ENCODE measurements at regions of chr9 and their contacts with region 1.

Region 1: DNA sequence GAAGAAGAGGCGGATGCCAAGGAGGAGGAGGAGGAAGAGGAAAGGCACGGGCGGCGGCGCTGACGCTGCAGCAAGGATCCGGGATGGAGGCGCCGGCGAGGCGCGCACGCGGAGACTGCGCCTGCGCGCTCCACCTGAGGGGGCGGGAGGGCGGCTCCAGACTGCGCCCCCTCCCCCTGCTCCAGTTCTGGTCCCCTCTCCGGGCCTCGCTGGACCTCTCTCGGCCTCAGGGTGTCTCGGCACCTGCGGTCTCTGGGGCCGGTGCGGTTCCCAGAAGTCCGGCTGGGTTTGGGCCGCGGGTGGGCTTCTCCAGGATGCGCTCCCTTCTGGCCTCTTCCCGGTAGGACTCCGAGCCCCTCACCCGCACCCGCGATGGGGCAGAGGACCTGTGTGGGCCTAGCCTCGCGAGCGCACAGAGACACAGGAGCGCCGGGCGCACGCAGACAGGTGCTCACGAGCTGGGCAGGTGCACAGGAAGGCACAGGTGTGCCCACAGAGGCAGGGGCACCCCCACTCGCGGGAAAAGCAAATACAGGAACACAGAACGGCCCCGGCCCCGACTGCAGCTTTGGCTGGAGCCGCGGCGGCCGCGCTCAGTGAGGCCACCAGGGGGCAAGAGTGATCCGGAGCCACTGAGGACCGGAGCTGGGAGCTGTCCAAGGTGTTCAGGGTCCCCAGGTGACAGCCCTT is at the start of gene NPDC1:
- DNase-seq: peak; percentile 94
- ATAC-seq: peak; percentile 69
- H3K4me3 Mint-ChIP-seq: peak within 1 kb of the TSS; percentile 77
- H3K27ac Mint-ChIP-seq: no peak within 1 kb of the TSS
- H3K4me1 Mint-ChIP-seq: peaks cover 10% of the 10 kb centered on the region
- H3K27me3 Mint-ChIP-seq: peaks cover 47% of the 10 kb centered on the region
- CTCF ChIP-seq: peak; percentile 83
- total RNA-seq, gene NPDC1: 64.3 to 68.8 TPM (median 64.5 TPM) in 3 replicates

Region 2: DNA sequence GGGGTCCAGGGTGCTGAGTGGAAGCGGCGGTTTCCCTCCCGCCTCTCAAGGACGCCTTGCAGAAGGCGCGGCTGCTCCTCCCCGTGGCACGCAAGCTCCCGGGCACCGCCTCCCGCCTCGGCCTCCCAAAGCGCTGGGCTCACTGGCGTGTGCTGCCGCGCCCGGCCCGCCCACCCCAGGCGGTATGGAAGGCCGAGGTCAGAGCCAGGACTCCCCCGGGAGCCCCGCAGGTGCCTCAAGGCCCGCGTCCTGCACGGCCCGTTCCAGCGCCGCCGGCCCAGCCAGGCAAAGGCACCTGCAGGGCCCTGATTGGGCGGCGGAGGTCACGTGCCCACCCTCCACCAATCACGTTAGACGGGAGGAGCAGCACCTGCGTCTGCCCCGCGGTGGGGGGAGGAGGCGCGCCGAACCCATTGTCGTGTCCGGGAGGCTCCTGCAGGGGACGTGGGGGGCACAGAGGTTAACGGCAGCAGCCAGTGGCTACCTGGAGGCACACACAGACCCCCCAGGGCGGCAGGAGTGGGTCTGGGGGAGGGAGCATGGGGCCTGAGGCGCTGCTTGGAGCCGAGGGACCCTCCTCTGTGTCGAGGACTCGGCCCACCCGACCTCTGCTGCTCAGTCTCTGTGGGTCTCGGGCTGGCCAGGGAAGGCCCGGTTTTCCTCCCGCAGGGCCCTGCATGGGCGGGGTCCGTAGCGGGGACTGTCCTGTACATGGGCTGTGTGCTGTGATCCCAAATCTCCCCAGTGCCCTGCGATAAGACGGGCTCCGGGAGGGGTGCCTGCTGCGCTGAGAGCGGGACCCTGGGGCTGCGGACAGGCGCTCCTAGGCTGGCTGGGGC is 96.2 kb before region 1 on chr9:
- CTCF ChIA-PET with region 1: interaction called, 12 read pairs
- POLR2A ChIA-PET with region 1: no interaction called
- DNase-seq: peak; percentile 97
- ATAC-seq: peak; percentile 81
- H3K4me3 Mint-ChIP-seq: peak overlapping the region; percentile 72
- H3K27ac Mint-ChIP-seq: no peak overlapping the region
- H3K4me1 Mint-ChIP-seq: peaks cover 7% of the 10 kb centered on the region
- H3K27me3 Mint-ChIP-seq: no peaks in the 10 kb centered on the region
- CTCF ChIP-seq: no peak

Region 3: GRCh38 chr9:136991993-136992818 is 54.0 kb before region 1 on chr9 and contains the start of gene PAXX:
- CTCF ChIA-PET with region 1: interaction called, 13 read pairs
- POLR2A ChIA-PET with region 1: no interaction called
- DNase-seq: peak; percentile 93
- ATAC-seq: peak; percentile 90
- H3K4me3 Mint-ChIP-seq: peak within 1 kb of the TSS; percentile 72
- H3K27ac Mint-ChIP-seq: no peak within 1 kb of the TSS
- H3K4me1 Mint-ChIP-seq: no peaks in the 10 kb centered on the region; the same call in 1 of the 2 replicates
- H3K27me3 Mint-ChIP-seq: peaks cover 34% of the 10 kb centered on the region
- CTCF ChIP-seq: no peak
- total RNA-seq, gene PAXX: 44.1 to 45.3 TPM (median 44.6 TPM) in 3 replicates

Region 4: DNA sequence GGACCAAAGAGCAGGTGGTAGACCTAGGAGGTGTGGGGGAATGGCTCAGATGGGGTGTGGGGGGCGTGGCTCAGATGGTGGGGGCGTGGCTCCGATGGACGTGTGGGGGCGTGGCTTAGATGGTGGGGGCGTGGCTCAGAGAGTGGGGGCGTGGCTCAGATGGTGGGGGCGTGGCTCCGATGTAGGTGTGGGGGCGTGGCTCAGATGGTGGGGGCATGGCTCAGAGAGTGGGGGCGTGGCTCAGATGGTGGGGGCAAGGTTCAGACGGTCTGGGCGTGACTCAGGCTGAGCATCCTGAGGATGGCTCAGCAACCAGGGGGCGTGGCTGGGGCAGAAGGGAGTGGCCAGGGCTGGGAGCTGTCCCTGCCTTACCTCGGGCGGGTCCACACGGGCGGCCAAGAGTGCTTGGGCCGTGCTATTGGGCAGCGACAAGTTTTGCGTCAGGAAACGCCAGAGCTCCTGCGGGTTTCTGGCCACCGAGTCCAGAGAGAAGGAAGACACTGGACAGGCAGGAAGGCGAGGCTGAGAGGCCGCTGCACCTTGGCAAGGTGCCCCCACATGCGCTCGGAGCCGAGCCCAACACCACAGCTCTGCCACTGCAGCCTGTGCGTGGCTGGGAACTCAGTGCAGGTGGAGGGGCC is 24.1 kb before region 1 on chr9:
- CTCF ChIA-PET with region 1: interaction called, 12 read pairs
- POLR2A ChIA-PET with region 1: no interaction called
- DNase-seq: peak; percentile 98
- ATAC-seq: peak; percentile 96
- H3K4me3 Mint-ChIP-seq: no peak overlapping the region
- H3K27ac Mint-ChIP-seq: no peak overlapping the region; the same call in 1 of the 2 replicates
- H3K4me1 Mint-ChIP-seq: no peaks in the 10 kb centered on the region; the same call in 1 of the 2 replicates
- H3K27me3 Mint-ChIP-seq: peaks cover 2% of the 10 kb centered on the region; the same call in 1 of the 2 replicates
- CTCF ChIP-seq: no peak

Region 5: DNA sequence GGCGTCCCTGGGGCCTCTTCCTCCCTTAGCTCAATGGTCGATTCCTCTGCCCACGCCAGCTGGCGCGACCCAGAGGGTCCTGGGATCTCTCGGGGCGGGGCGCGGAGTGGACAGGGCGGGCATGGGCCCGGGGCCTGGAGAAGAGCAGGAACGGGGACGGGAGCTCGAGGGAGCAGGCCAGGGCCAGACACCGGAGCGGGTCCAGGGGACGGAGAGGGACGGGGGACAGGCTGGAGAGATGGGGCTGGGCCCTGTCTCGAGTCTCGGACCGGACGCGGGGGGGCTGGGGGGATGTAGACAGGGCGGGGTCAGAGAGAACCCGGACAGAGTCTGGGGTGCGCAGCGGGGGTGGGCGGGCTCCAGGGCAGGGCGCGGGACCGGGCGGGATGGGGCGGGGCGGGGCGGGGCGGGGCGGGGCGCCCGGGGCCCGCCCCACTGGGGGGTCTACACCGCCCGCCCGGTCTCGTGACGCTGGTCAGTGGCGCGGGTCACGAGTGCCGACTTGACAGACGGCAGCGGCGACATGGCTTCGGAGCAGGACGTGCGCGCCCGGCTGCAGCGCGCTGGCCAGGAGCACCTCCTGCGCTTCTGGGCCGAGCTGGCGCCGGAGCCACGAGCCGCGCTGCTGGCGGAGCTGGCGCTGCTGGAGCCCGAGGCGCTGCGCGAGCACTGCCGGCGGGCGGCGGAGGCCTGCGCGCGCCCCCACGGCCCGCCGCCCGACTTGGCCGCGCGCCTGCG is 30.9 kb after region 1 on chr9 and contains the start of gene UAP1L1:
- CTCF ChIA-PET with region 1: interaction called, 179 read pairs
- POLR2A ChIA-PET with region 1: no interaction called
- DNase-seq: peak; percentile 64
- ATAC-seq: peak; percentile 29
- H3K4me3 Mint-ChIP-seq: peak within 1 kb of the TSS; percentile 69
- H3K27ac Mint-ChIP-seq: no peak within 1 kb of the TSS
- H3K4me1 Mint-ChIP-seq: peaks cover 16% of the 10 kb centered on the region
- H3K27me3 Mint-ChIP-seq: peaks cover 36% of the 10 kb centered on the region
- CTCF ChIP-seq: no peak
- total RNA-seq, gene UAP1L1: 12.1 to 17.7 TPM (median 14.3 TPM) in 3 replicates

Region 6: DNA sequence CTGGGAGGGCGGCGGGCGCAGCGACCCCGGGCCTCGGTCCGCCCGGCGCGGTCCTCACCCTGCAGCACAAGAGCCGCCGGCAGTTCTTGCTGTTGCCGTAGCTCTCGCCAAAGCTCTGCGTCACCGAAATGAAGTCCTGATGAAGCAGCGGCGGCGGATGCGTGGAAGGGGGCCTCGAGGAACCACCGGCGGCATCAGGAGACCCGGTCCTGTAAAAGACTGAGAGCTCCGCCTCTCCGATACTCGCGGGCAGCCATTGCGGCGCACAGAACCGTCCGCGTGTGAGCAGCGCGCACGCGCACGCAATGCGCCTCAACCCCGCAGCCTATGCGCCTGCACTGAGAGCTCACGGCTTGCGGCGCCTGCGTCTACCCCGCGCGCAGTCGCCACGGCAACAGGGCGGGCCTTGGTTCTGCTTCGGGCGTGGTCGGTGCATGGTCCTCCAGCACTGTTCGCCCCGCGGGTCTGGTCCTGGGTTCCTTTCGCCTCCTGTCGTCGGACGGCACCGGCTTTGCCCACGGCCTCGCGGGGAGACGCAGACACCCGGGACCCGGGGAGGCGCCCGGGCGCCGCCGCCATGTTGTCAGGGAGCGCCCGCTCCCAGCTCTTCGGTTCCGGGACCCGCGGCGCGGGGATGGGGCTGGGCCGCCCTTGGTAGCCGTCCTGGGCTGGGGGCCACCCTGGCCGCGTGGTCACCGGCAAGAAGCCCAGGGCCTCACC is 83.4 kb after region 1 on chr9:
- CTCF ChIA-PET with region 1: interaction called, 24 read pairs
- POLR2A ChIA-PET with region 1: no interaction called
- DNase-seq: peak; percentile 87
- ATAC-seq: peak; percentile 96
- H3K4me3 Mint-ChIP-seq: peak overlapping the region; percentile 78
- H3K27ac Mint-ChIP-seq: no peak overlapping the region
- H3K4me1 Mint-ChIP-seq: peaks cover 14% of the 10 kb centered on the region
- H3K27me3 Mint-ChIP-seq: peaks cover 23% of the 10 kb centered on the region
- CTCF ChIP-seq: no peak

Region 7: DNA sequence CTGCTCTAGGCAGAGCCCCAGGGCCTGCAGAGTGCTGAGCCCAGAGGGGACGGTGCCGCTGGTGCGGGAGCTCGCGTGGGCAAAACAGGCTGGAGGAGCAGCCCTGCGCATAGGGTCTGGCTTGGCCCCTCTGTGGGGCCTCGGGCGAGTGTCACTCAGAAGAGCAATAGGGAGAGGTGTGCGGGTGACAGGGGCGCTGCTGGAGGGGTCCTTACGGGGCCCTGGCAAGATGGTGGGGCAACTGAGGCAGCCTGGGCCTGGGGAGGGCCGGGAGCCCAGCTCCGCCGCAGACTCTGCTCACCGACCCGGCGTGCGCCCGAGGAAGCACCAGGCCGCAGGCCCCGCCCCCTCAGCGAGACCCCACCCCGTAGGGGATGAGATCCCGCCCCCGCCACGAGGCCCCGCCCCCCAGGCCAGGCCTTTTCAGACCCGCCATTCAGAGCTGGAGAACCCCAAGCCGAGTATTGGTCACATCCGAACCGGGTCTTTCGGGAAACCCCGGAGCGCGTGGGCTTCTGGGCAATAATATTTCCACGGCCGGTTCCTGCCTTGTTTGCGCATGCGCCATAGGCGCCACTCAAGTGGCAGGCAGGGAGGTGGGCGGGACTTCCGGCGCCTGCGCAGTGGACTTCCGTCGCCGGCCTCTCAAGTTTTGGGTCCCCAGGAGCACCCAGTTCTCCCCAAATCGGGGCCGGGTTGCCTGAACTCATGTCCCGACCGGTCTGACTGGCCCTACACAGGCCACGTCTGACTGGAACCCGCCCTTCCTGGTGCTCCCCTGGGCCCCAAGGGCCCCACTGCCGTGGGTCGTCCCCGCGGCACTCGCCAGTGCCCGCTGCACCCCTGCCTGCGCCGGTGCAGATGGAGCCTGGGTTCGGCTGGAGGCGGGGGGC is 177.1 kb after region 1 on chr9:
- CTCF ChIA-PET with region 1: interaction called, 11 read pairs
- POLR2A ChIA-PET with region 1: no interaction called
- DNase-seq: peak; percentile 97
- ATAC-seq: peak; percentile 73
- H3K4me3 Mint-ChIP-seq: peak overlapping the region; percentile 77
- H3K27ac Mint-ChIP-seq: no peak overlapping the region
- H3K4me1 Mint-ChIP-seq: peaks cover 3% of the 10 kb centered on the region
- H3K27me3 Mint-ChIP-seq: no peaks in the 10 kb centered on the region
- CTCF ChIP-seq: no peak